ENCODE measurements at regions of chr18 and their contacts with region 1.

Region 1: GRCh38 chr18:43587538-43588153 is 310.4 kb upstream of the SYT4 start:
- DNase-seq: no peak
- H3K4me3 ChIP-seq: no peak overlapping the region
- H3K27ac ChIP-seq: no peak overlapping the region
- H3K4me1 ChIP-seq: no peaks in the 10 kb centered on the region
- H3K27me3 ChIP-seq: no peaks in the 10 kb centered on the region
- CTCF ChIP-seq: peak in 2 of 3 experiments; percentile 45 to 63; a peak in 2 of 4 replicates
- EP300 ChIP-seq: no peak
- POLR2A ChIP-seq: no peak
- RAD21 ChIP-seq: peak; percentile 54 to 61

Region 2: GRCh38 chr18:42114310-42114943 is 1473.2 kb before region 1 on chr18:
- CTCF ChIA-PET with region 1: interaction called, 13 read pairs
- POLR2A ChIA-PET with region 1: no interaction called
- DNase-seq: peak; percentile 36 to 78
- H3K4me3 ChIP-seq: no peak overlapping the region
- H3K27ac ChIP-seq: no peak overlapping the region
- H3K4me1 ChIP-seq: no peaks in the 10 kb centered on the region
- H3K27me3 ChIP-seq: no peaks in the 10 kb centered on the region
- CTCF ChIP-seq: peak; percentile 30 to 85 (median 78)
- EP300 ChIP-seq: no peak
- POLR2A ChIP-seq: no peak
- RAD21 ChIP-seq: peak; percentile 98

Region 3: DNA sequence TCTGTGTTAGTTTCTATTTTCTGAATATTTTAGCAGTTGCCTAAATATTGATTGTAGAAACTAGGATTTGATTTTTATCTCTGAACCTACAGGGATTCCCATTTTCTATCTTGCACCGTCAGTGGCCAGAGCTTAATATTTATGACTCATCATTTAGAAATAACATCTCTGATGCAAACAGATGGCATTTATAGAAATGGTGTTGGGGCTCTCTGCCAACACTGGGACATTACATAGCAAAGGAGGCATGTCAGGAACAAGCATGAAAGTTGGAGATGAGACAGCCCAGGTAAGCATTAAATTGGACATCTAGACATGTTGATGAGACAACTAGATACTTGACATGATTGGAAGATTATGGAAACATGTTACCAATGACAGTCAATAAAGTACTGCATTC is 145.1 kb before region 1 on chr18:
- CTCF ChIA-PET with region 1: no interaction called
- POLR2A ChIA-PET with region 1: no interaction called
- DNase-seq: no peak
- H3K4me3 ChIP-seq: no peak overlapping the region
- H3K27ac ChIP-seq: no peak overlapping the region
- H3K4me1 ChIP-seq: no peaks in the 10 kb centered on the region
- H3K27me3 ChIP-seq: no peaks in the 10 kb centered on the region
- CTCF ChIP-seq: no peak
- EP300 ChIP-seq: no peak
- POLR2A ChIP-seq: no peak
- RAD21 ChIP-seq: no peak

Region 4: GRCh38 chr18:43563780-43564179 is 23.9 kb before region 1 on chr18:
- CTCF ChIA-PET with region 1: interaction called, 247 read pairs
- POLR2A ChIA-PET with region 1: no interaction called
- DNase-seq: no peak
- H3K4me3 ChIP-seq: no peak overlapping the region
- H3K27ac ChIP-seq: no peak overlapping the region
- H3K4me1 ChIP-seq: no peaks in the 10 kb centered on the region
- H3K27me3 ChIP-seq: no peaks in the 10 kb centered on the region
- CTCF ChIP-seq: peak in 2 of 3 experiments; percentile 70; a peak in 3 of 4 replicates
- EP300 ChIP-seq: no peak
- POLR2A ChIP-seq: no peak
- RAD21 ChIP-seq: peak; percentile 90 to 96

Region 5: DNA sequence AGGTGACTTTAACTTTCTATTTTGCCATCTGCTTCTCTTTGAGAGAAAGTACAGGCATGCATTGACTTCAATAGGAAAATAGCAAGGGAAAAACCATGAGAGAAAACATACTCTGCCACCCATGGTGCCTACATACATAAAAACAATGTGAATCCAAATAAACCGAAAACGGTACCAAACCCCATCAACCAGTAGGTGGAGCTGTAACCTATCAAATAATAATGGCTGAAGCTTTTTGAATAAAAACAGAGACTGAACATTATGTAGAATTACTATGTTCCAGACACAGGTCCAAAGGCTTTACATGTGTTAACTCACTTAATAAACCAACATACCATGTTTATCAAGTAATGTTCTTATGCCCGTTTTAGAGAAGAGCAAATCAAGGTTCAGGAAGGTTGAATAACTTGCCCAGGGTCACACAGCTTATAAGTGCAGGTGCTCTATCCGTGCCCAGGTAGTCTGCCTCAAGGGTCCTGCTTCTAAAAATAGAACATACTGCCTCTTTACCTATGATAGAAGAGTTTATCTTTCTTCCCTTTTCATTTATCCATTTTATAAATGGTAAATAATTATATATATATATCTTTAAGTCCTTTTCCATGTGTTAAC is 16.5 kb before region 1 on chr18:
- CTCF ChIA-PET with region 1: interaction called, 247 read pairs
- POLR2A ChIA-PET with region 1: no interaction called
- DNase-seq: peak in 1 of 2 experiments; percentile 52
- H3K4me3 ChIP-seq: no peak overlapping the region
- H3K27ac ChIP-seq: no peak overlapping the region
- H3K4me1 ChIP-seq: peaks cover 0 to 4% (median 3%) of the 10 kb centered on the region in 4 experiments; a peak in 4 of 7 replicates
- H3K27me3 ChIP-seq: no peaks in the 10 kb centered on the region
- CTCF ChIP-seq: peak in 2 of 3 experiments; percentile 45 to 74; a peak in 2 of 4 replicates
- EP300 ChIP-seq: no peak
- POLR2A ChIP-seq: no peak
- RAD21 ChIP-seq: peak; percentile 66 to 72

Region 6: DNA sequence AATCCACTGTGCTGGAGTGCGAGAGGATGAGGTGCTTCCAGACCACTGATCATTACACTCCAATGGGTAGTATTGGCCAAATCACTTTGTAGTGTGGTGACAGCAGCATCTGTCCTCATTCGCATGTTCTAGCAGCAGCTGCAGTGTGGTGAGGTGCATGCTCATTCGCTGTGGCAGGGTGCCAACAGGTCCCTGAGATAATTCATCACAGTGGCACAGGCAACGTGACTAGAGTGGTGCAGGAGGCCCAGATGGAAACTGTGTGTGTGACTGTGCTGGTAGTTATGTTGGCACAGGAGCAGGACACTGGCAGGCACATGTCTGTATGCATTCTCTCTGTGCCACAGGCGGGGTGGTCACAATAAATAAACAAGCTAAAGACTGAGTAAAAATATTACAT is 19.1 kb after region 1 on chr18:
- CTCF ChIA-PET with region 1: interaction called, 14 read pairs
- POLR2A ChIA-PET with region 1: no interaction called
- DNase-seq: no peak
- H3K4me3 ChIP-seq: no peak overlapping the region
- H3K27ac ChIP-seq: no peak overlapping the region
- H3K4me1 ChIP-seq: no peaks in the 10 kb centered on the region
- H3K27me3 ChIP-seq: no peaks in the 10 kb centered on the region
- CTCF ChIP-seq: no peak
- EP300 ChIP-seq: no peak
- POLR2A ChIP-seq: no peak
- RAD21 ChIP-seq: no peak

Region 7: GRCh38 chr18:43648002-43648401 is 60.4 kb after region 1 on chr18:
- CTCF ChIA-PET with region 1: no interaction called
- POLR2A ChIA-PET with region 1: no interaction called
- DNase-seq: no peak
- H3K4me3 ChIP-seq: no peak overlapping the region
- H3K27ac ChIP-seq: no peak overlapping the region
- H3K4me1 ChIP-seq: no peaks in the 10 kb centered on the region
- H3K27me3 ChIP-seq: no peaks in the 10 kb centered on the region
- CTCF ChIP-seq: peak in 1 of 3 experiments; percentile 30; a peak in 1 of 4 replicates
- EP300 ChIP-seq: no peak
- POLR2A ChIP-seq: no peak
- RAD21 ChIP-seq: peak; percentile 46 to 47